A673 (cell line): ENCODE measurements at regions of chr4 and their contacts with region 1.

Region 1: GRCh38 chr4:26749867-26750266 is 110.8 kb upstream of the STIM2 start:
- DNase-seq: no peak
- H3K4me3 ChIP-seq: no peak overlapping the region
- H3K27ac ChIP-seq: no peak overlapping the region
- H3K4me1 ChIP-seq: no peaks in the 10 kb centered on the region
- H3K27me3 ChIP-seq: no peaks in the 10 kb centered on the region
- CTCF ChIP-seq: no peak

Region 2: DNA sequence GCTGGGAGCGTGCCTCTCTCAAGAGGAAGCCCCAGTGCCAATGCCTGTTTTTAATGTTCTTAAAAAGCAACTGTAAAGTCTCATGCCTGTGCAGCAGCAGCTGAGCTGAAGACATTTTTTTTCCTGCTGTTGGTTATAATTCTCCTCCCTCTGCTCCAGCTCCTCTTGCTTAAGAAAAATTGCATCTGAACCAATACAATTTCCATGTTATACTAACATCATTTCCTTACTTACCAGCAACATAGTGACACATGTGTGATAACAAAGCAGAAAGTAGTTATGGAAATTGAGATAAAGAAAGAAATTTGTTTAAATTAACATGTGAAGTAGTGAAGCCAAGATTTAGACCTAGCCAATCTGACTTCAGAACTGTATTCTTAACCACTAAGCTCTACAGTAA is 64.6 kb before region 1 on chr4:
- CTCF ChIA-PET with region 1: interaction called, 12 read pairs
- POLR2A ChIA-PET with region 1: no interaction called
- intact Hi-C with region 1: no loop called
- DNase-seq: no peak
- H3K4me3 ChIP-seq: no peak overlapping the region
- H3K27ac ChIP-seq: no peak overlapping the region
- H3K4me1 ChIP-seq: no peaks in the 10 kb centered on the region
- H3K27me3 ChIP-seq: no peaks in the 10 kb centered on the region
- CTCF ChIP-seq: no peak